ENCODE measurements at regions of chr6 and their contacts with region 1.

Region 1: DNA sequence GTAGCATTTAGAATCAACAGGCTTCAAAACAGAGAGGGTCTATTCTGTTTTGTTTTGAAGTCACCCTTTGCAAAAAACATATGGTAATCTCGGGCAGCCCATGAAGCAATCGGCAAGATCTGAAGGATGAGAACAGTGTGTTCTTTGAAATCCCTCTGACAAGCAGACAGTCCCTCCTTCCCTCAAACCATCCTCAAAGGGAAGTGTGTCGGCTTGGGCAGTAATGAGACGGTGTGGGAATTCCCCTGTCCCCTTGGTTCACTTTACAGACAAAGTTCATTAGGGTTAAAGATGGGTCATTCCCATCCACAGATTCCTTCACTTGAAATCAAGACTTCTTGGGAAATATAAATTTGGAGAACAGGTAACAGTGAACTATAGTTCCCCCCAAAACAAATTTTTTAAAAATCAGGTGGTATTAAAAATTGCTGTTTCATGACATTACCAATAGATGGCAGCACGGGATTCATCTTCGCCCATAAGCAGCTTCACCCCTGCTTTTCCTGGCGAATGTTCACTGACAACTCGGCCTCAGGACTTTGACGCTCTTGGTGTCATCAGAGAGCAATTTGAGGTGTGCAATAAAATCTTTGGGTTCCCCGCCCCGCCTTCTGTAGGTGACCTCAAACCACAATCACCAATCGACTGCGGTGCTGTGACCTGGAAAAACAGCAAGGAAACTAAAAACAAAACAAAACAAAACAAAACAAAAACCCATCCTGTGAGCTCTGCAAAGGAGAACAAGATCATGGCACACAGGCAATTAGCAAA is 159.3 kb upstream of the TNFAIP3 start:
- DNase-seq: peak; percentile 89
- ATAC-seq: peak; percentile 64
- H3K4me3 Mint-ChIP-seq: peak overlapping the region; percentile 62
- H3K27ac Mint-ChIP-seq: peak overlapping the region; percentile 94
- H3K4me1 Mint-ChIP-seq: peaks cover 77% of the 10 kb centered on the region
- H3K27me3 Mint-ChIP-seq: no peaks in the 10 kb centered on the region

Region 2: DNA sequence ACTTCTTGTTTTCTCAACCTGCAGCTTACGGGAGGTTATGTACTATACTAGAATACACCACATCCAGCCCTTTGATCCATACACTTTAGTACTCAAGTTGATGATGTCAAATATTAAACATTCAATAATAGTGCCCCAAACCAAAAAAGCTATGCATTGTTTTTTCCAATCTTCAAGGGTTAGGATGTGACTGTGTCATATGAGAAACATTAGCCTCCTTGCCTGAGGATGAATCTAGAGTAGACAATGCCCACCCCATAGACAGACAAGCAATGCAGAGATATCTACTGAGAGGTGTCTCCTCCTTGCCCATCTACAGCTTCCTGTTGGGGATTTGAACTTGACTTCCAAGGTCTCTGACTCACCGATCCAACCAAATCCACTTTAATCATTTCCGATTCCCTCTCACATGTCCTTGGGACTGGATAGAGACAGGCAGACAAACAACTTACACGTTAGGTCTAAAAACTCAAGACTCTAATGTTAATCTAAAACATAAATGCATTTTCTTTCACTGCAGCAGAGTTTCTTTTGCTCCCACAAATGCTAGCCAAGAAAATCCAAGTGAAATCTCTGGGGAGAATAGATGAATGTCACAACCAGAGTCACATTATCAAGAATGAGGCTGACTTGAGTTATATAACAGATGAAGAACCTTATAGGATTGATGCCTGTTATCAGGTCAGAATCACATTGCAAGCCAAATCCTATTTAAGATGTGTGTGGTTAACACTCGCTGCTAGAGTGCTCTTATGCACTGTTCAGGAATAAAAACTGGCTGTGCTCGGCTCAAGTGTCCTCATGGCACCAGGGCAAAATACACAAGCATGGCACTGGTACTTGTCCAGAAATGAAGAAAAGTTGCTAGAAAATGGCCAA is 83.7 kb after region 1 on chr6:
- CTCF ChIA-PET with region 1: interaction called, 5 read pairs
- POLR2A ChIA-PET with region 1: interaction called, 3 read pairs
- intact Hi-C with region 1: loop called in 1 of 2 experiments (anchors 2 kb)
- DNase-seq: no peak
- ATAC-seq: peak; percentile 31
- H3K4me3 Mint-ChIP-seq: peak overlapping the region; percentile 47
- H3K27ac Mint-ChIP-seq: peak overlapping the region; percentile 77
- H3K4me1 Mint-ChIP-seq: peaks cover 55% of the 10 kb centered on the region
- H3K27me3 Mint-ChIP-seq: no peaks in the 10 kb centered on the region

Region 3: GRCh38 chr6:137823826-137824555 is 116.2 kb after region 1 on chr6:
- CTCF ChIA-PET with region 1: interaction called, 5 read pairs
- POLR2A ChIA-PET with region 1: interaction called, 8 read pairs
- intact Hi-C with region 1: loop called in 1 of 2 experiments (anchors 1 kb)
- DNase-seq: peak; percentile 82
- ATAC-seq: peak; percentile 48
- H3K4me3 Mint-ChIP-seq: peak overlapping the region; percentile 58
- H3K27ac Mint-ChIP-seq: peak overlapping the region; percentile 93
- H3K4me1 Mint-ChIP-seq: peaks cover 86% of the 10 kb centered on the region
- H3K27me3 Mint-ChIP-seq: no peaks in the 10 kb centered on the region

Region 4: GRCh38 chr6:137903933-137904821 is 196.4 kb after region 1 on chr6:
- CTCF ChIA-PET with region 1: interaction called, 3 read pairs
- POLR2A ChIA-PET with region 1: no interaction called
- intact Hi-C with region 1: loop called in 1 of 2 experiments (anchors 1 kb)
- DNase-seq: peak; percentile 75
- ATAC-seq: peak; percentile 85
- H3K4me3 Mint-ChIP-seq: peak overlapping the region; percentile 69
- H3K27ac Mint-ChIP-seq: peak overlapping the region; percentile 98
- H3K4me1 Mint-ChIP-seq: peaks cover 62% of the 10 kb centered on the region
- H3K27me3 Mint-ChIP-seq: no peaks in the 10 kb centered on the region

Region 5: GRCh38 chr6:137944793-137945498 is 237.2 kb after region 1 on chr6:
- CTCF ChIA-PET with region 1: interaction called, 19 read pairs
- POLR2A ChIA-PET with region 1: no interaction called
- intact Hi-C with region 1: loop called (anchors 1 kb)
- DNase-seq: peak; percentile 36
- ATAC-seq: peak; percentile 37
- H3K4me3 Mint-ChIP-seq: no peak overlapping the region
- H3K27ac Mint-ChIP-seq: peak overlapping the region; percentile 23
- H3K4me1 Mint-ChIP-seq: peaks cover 52% of the 10 kb centered on the region
- H3K27me3 Mint-ChIP-seq: no peaks in the 10 kb centered on the region

Region 6: DNA sequence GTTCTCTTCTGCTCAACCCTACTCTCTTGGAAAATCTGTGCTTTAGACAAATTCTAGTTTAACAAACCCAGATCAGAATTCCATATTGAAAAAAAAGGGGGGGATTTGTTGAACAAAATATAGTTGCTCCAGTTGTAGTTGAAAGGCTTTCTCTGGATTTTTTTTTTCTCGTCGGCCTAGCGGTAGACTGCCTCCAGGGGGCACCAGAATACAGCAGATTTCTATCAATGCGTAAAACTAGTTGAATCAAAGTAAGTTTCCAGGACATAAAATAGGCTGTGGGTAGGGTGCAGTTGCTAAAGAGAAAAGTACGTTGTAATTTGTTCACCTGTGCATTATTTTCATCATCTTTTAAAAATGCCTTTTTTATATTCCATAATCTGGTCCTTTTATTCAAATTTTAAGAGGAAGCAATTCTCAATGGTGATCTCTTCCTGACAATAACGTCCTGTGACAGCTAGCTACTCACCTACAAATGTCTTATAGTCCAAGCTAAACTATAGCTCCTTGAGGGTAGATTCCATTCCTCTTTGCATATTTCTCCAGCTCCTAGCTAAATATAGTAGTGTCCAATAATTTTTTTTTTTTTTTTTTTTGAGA is 294.1 kb after region 1 on chr6:
- CTCF ChIA-PET with region 1: interaction called, 27 read pairs
- POLR2A ChIA-PET with region 1: interaction called, 3 read pairs
- intact Hi-C with region 1: loop called (anchors 1 kb)
- DNase-seq: peak; percentile 76
- ATAC-seq: peak; percentile 31
- H3K4me3 Mint-ChIP-seq: no peak overlapping the region
- H3K27ac Mint-ChIP-seq: no peak overlapping the region
- H3K4me1 Mint-ChIP-seq: peaks cover 20% of the 10 kb centered on the region
- H3K27me3 Mint-ChIP-seq: peaks cover 3% of the 10 kb centered on the region

Region 7: DNA sequence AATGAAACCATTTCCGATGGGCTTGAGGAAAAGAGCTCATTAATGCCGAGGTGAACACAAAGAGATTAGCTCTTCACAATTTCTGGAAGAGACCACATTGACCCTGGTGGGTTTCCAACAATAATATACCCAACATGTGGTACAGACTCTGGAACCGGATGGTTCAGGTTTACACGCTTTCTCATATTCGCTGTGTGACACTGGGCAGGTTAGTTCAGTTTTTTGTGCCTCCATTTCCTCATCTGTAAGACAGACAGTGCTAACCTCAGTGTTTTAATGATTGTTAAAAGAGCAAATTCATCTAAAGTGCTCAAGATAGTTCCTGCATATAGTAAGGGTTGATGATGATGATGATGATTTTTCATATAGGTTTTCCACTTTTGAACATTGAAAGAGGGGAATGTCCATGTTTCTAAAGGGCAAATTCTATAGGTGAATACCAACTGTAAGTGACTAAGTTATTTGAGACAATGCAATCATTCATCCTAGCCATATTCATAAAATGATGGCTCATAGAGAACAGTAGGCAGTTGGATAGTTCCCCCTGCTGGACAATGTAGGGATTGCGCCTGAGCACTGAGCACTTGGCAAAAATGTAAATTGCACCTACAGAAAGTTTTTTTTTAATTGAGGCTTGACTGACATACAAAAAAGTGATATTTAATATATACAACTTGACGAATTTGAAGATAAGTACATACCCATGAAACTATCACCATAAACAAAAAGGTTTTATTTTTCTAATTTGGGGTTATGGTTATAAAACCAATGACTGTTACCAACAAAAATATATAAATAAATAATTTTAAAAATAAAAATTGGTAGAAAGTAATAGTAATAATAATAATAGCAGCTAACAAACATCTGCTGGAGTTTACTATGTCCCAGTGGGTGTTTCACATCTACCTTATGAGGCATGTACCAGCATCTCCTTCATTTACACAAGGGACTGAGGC is 401.5 kb after region 1 on chr6:
- CTCF ChIA-PET with region 1: interaction called, 9 read pairs
- POLR2A ChIA-PET with region 1: no interaction called
- intact Hi-C with region 1: loop called (anchors 1 to 2 kb)
- DNase-seq: peak; percentile 89
- ATAC-seq: peak; percentile 49
- H3K4me3 Mint-ChIP-seq: no peak overlapping the region
- H3K27ac Mint-ChIP-seq: no peak overlapping the region
- H3K4me1 Mint-ChIP-seq: peaks cover 14% of the 10 kb centered on the region
- H3K27me3 Mint-ChIP-seq: peaks cover 34% of the 10 kb centered on the region

Measured in activated CD4-positive, alpha-beta T cell treated with anti-CD3 and anti-CD28 coated beads for 36 hours (primary cell).